Calu3 (cell line): ENCODE measurements at regions of chr6 and their contacts with region 1.

Region 1: GRCh38 chr6:4848382-4849068 is 72.3 kb downstream of the CDYL start:
- DNase-seq: peak; percentile 10
- H3K4me3 Mint-ChIP-seq: no peak overlapping the region
- H3K27ac Mint-ChIP-seq: no peak overlapping the region
- H3K4me1 Mint-ChIP-seq: peaks cover 33% of the 10 kb centered on the region
- H3K27me3 Mint-ChIP-seq: no peaks in the 10 kb centered on the region
- CTCF ChIP-seq: no peak

Region 2: GRCh38 chr6:4805553-4806336 is 42.8 kb before region 1 on chr6:
- CTCF ChIA-PET with region 1: no interaction called
- intact Hi-C with region 1: loop called (anchors 5 kb)
- DNase-seq: peak; percentile 62
- H3K4me3 Mint-ChIP-seq: no peak overlapping the region
- H3K27ac Mint-ChIP-seq: no peak overlapping the region
- H3K4me1 Mint-ChIP-seq: peaks cover 10% of the 10 kb centered on the region
- H3K27me3 Mint-ChIP-seq: no peaks in the 10 kb centered on the region
- CTCF ChIP-seq: peak; percentile 55

Region 3: GRCh38 chr6:4820704-4821276 is 27.7 kb before region 1 on chr6:
- CTCF ChIA-PET with region 1: no interaction called
- intact Hi-C with region 1: no loop called
- DNase-seq: no peak
- H3K4me3 Mint-ChIP-seq: no peak overlapping the region
- H3K27ac Mint-ChIP-seq: no peak overlapping the region
- H3K4me1 Mint-ChIP-seq: no peaks in the 10 kb centered on the region
- H3K27me3 Mint-ChIP-seq: no peaks in the 10 kb centered on the region
- CTCF ChIP-seq: no peak